Dendritic cell treated with granulocyte-macrophage colony-stimulating factor and Interleukin-4, amounts not matched to agents 40 ng/mL and 50 ng/mL, for 4 days (primary cell): ENCODE measurements at regions of chr2 and their contacts with region 1.

Region 1: DNA sequence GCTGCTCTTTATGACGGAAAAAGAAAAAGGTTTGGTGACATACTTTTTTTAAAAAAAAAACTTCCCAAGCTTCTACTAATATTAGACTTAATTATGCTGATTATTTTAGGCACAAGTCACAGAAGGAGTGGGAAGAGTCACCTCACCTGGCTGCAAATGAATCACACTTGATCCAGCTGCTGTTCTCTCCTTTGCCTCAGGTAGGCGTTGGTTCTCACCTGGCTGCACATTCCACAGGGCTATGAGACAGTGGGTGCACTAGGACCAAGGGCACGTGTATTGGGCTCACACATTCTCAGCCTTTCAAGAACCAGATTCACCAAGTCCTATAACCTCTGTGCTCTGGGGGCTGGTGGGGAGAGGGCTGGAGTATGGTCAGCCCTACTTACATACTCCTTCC is 93.3 kb downstream of the TGFA start:
- H3K4me3 Mint-ChIP-seq: no peak overlapping the region
- H3K27ac Mint-ChIP-seq: no peak overlapping the region
- H3K4me1 Mint-ChIP-seq: no peaks in the 10 kb centered on the region
- H3K27me3 Mint-ChIP-seq: no peaks in the 10 kb centered on the region

Region 2: GRCh38 chr2:70425687-70426301 is 34.5 kb before region 1 on chr2:
- intact Hi-C with region 1: no loop called
- H3K4me3 Mint-ChIP-seq: no peak overlapping the region
- H3K27ac Mint-ChIP-seq: no peak overlapping the region
- H3K4me1 Mint-ChIP-seq: no peaks in the 10 kb centered on the region
- H3K27me3 Mint-ChIP-seq: peaks cover 3% of the 10 kb centered on the region

Region 3: DNA sequence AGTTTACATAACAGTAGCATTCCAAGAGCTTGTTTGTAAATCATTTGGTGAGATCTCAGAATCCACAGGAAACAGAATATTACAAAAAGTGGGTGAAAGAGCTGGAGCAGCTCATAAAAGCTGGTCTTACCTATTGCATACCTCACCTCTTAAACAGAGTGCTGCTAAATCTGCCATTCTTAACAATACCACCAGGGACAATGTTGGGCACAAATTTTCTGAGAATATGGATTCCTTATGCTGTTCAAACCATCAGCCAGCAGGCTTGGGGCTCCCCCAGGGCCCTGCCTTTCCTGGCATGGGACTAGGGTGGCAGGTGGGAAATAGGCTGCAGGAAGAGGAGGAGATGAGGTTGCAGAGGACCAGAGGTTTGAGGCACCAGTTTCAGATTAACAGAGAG is 37.7 kb after region 1 on chr2:
- intact Hi-C with region 1: loop called (anchors 5 kb)
- H3K4me3 Mint-ChIP-seq: no peak overlapping the region
- H3K27ac Mint-ChIP-seq: no peak overlapping the region
- H3K4me1 Mint-ChIP-seq: peaks cover 12% of the 10 kb centered on the region
- H3K27me3 Mint-ChIP-seq: no peaks in the 10 kb centered on the region

Region 4: GRCh38 chr2:70546376-70546775 is 86.0 kb after region 1 on chr2:
- intact Hi-C with region 1: loop called (anchors 5 kb)
- H3K4me3 Mint-ChIP-seq: no peak overlapping the region
- H3K27ac Mint-ChIP-seq: no peak overlapping the region
- H3K4me1 Mint-ChIP-seq: peaks cover 34% of the 10 kb centered on the region
- H3K27me3 Mint-ChIP-seq: no peaks in the 10 kb centered on the region